T-cell (primary cell): ENCODE measurements at regions of chr15 and their contacts with region 1.

Region 1: GRCh38 chr15:41811432-41812195 is 16.3 kb upstream of the JMJD7 start:
- DNase-seq: peak; percentile 43 to 83 (median 69)
- ATAC-seq: peak; percentile 89 to 98 (median 90)
- H3K4me3 ChIP-seq: no peak overlapping the region
- H3K4me3 Mint-ChIP-seq: no peak overlapping the region
- H3K27ac ChIP-seq: no peak overlapping the region
- H3K27ac Mint-ChIP-seq: peak overlapping the region in 1 of 2 donors; percentile 48
- H3K4me1 ChIP-seq: peaks cover 0 to 19% of the 10 kb centered on the region in 2 experiments
- H3K4me1 Mint-ChIP-seq: peaks cover 17% of the 10 kb centered on the region in 3 donors
- H3K27me3 ChIP-seq: no peaks in the 10 kb centered on the region
- H3K27me3 Mint-ChIP-seq: no peaks in the 10 kb centered on the region

Region 2: GRCh38 chr15:41788262-41788661 is 23.4 kb before region 1 on chr15:
- CTCF ChIA-PET with region 1: no interaction called
- POLR2A ChIA-PET with region 1: no interaction called
- DNase-seq: no peak
- ATAC-seq: no peak
- H3K4me3 ChIP-seq: no peak overlapping the region
- H3K4me3 Mint-ChIP-seq: no peak overlapping the region
- H3K27ac ChIP-seq: no peak overlapping the region
- H3K27ac Mint-ChIP-seq: peak overlapping the region in 1 of 2 donors; percentile 24
- H3K4me1 ChIP-seq: peaks cover 20 to 21% of the 10 kb centered on the region in 2 experiments
- H3K4me1 Mint-ChIP-seq: peaks cover 37 to 48% (median 42%) of the 10 kb centered on the region in 3 donors
- H3K27me3 ChIP-seq: no peaks in the 10 kb centered on the region
- H3K27me3 Mint-ChIP-seq: no peaks in the 10 kb centered on the region

Region 3: DNA sequence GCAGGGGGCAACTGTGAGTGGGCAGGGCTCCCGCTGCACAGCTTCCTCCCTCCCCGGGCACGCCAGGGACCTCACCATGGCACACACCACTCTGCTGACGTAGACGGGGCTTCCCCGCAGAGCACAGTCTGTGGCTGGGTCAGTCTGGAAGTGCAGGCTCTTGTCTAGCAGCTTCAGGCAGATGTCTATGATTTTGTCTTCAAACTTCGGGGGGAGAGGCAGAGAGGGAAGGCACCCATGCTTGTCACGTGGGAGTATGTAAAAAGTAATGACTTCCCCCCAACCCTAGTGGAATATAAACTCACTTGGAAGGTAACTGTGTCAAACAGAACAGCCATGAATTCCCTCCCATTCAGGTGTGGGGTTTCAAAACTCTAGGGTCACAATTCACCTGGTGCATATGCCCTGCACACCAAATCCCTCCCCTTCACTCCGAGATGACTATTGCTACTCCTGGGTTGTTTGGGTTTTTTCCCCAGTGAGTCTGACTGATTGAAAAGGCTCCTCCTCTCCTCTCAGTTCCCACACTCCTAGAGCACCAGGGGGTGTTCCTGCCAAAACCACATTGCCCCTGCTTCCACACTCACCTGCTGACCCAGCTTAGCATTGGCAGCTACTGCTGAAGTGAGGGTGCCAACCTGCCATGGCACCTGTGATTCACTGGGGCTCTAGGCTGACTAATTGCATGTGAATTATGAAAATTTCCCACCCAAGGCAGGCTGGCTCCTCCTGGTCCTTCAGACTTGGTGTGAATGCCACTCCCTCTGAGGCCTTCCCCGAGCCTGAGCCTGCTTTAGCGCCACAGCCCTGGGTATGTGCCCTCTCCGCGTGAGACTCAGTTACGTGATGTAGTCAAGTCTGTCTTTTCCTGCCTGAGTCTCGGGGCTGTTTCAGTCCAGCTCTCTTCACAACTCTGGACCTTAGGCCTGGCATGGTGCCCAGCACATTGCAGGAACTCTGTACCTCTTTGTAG is 1442.1 kb after region 1 on chr15:
- CTCF ChIA-PET with region 1: no interaction called
- POLR2A ChIA-PET with region 1: interaction called in 1 of 2 experiments, 12 read pairs
- DNase-seq: peak in 12 of 35 experiments; percentile 6 to 63 (median 20)
- ATAC-seq: peak in 2 of 4 experiments; percentile 20 to 89
- H3K4me3 ChIP-seq: no peak overlapping the region
- H3K4me3 Mint-ChIP-seq: no peak overlapping the region
- H3K27ac ChIP-seq: no peak overlapping the region
- H3K27ac Mint-ChIP-seq: no peak overlapping the region
- H3K4me1 ChIP-seq: peaks cover 0 to 11% of the 10 kb centered on the region in 2 experiments
- H3K4me1 Mint-ChIP-seq: peaks cover 5 to 17% (median 15%) of the 10 kb centered on the region in 3 donors
- H3K27me3 ChIP-seq: peaks cover 0 to 22% of the 10 kb centered on the region in 2 experiments
- H3K27me3 Mint-ChIP-seq: peaks cover 14 to 16% of the 10 kb centered on the region in 2 donors